Activated B cell treated with CpG ODN at 0.5 μM for 24 hours (primary cell): ENCODE measurements at regions of chr10 and their contacts with region 1.

Region 1: GRCh38 chr10:3757638-3758490 is 27.1 kb downstream of the KLF6 start:
- DNase-seq: no peak
- ATAC-seq: peak; percentile 60
- H3K4me3 Mint-ChIP-seq: peak overlapping the region; percentile 78
- H3K27ac Mint-ChIP-seq: peak overlapping the region; percentile 99
- H3K4me1 Mint-ChIP-seq: peaks cover 76% of the 10 kb centered on the region
- H3K27me3 Mint-ChIP-seq: no peaks in the 10 kb centered on the region
- CTCF ChIP-seq: no peak

Region 2: DNA sequence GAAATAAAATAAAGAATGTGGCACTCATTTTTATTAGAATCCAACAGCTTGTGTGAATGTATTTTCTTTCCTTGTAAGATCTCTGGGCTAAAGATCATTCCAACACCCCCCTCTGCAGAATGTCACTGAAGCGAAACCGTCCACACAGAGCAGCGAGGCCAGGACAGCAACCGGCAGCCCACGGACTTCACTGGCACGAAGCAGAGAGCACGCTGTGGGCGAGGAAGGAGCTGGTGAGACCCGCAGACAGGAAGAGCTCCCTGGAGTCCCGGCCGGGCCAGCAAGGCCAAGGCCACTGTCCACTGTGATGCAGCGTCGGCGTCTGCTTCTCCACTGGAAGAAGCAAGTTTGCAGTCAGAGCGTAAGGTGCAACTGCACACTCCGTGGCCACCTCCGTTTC is 172.5 kb before region 1 on chr10:
- CTCF ChIA-PET with region 1: no interaction called
- POLR2A ChIA-PET with region 1: no interaction called
- intact Hi-C with region 1: no loop called
- DNase-seq: no peak
- ATAC-seq: no peak
- H3K4me3 Mint-ChIP-seq: no peak overlapping the region
- H3K27ac Mint-ChIP-seq: no peak overlapping the region
- H3K4me1 Mint-ChIP-seq: no peaks in the 10 kb centered on the region
- H3K27me3 Mint-ChIP-seq: no peaks in the 10 kb centered on the region
- CTCF ChIP-seq: no peak

Region 3: DNA sequence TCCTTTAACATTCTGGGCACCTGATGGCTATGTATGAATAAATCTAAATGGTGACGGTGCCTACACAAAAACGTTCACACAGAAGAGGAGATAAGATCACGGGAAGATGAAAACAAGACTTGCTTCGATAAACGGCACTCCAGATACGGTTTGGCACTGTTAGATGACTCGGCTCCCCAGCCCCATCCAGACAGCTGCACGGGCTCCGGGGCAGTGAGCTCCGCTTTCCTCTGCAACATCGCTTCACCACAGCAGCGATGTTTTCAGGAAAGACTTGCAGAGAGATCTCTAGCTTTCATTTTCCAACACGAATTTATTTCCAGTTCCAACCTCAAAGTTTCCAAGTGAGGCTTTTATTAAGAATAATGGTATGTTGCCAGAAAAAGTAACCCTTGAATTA is 105.0 kb before region 1 on chr10:
- CTCF ChIA-PET with region 1: no interaction called
- POLR2A ChIA-PET with region 1: no interaction called
- intact Hi-C with region 1: loop called (anchors 10 kb)
- DNase-seq: no peak
- ATAC-seq: no peak
- H3K4me3 Mint-ChIP-seq: peak overlapping the region; percentile 21
- H3K27ac Mint-ChIP-seq: no peak overlapping the region
- H3K4me1 Mint-ChIP-seq: peaks cover 18% of the 10 kb centered on the region
- H3K27me3 Mint-ChIP-seq: no peaks in the 10 kb centered on the region
- CTCF ChIP-seq: no peak

Region 4: DNA sequence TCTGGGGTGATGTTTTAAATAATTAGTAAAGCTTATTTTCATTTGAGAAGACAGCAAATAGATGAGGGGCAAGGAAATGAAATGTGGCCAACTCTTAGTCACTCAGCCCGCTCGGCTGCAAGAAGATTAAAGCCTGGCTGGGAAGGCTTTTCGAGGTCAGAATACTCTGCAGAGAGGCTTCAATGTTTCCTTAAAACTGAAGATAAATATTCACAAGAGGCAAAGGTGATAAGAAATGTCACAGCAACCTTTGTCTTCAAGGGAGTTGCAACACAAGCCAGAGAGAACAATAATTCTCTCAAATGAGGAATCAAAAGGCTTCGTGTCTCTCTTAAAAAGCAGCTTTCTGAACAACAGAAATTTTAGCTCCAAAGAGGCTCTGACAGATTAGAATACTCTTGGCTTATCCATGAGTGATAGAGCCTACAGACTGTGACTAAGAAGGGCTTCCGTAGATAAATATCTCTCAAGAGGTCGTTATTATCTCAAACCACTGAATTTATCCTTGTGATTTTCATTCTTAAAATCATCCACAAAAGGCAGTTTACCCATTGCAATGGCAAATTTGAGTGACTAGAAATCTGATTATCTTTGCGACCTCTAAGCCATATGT is 65.4 kb before region 1 on chr10:
- CTCF ChIA-PET with region 1: no interaction called
- POLR2A ChIA-PET with region 1: no interaction called
- intact Hi-C with region 1: no loop called
- DNase-seq: no peak
- ATAC-seq: no peak
- H3K4me3 Mint-ChIP-seq: no peak overlapping the region
- H3K27ac Mint-ChIP-seq: no peak overlapping the region
- H3K4me1 Mint-ChIP-seq: no peaks in the 10 kb centered on the region
- H3K27me3 Mint-ChIP-seq: no peaks in the 10 kb centered on the region
- CTCF ChIP-seq: no peak

Region 5: DNA sequence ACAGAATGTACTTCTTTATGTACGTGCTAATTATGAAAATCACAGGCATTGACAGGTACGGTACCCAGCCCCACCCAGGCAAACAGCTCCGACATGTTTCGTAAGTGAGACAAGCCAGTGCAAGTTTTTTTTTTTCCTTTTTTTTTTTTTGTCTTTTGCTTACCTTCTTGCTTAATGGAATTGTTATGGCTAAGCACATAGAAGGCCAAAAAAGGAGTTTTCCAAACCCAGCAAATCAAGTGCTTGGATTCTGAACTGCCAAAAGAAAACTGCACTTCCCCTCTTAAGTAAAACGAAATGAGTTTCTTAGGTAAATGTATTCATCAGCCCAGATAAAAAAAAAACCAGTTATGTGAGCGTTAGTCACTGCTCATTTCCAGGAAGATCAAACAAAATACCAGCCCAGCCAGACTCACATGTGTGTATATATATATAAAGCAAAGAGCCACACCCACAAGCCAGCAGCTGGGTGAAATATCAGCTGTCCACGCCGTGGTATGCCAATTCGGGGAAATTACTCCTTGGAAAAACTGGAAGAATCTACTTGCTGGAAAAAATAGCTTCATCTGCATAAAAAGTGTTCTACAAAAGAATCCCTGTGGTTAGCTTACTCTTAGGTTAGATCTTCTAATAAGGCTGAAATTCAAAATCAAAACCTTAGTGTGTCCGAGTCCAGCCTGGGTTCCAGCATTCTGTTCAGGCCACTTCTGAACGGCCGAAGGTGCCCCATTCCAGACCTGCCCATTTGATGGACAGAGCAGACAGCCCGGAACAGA is 19.1 kb after region 1 on chr10:
- CTCF ChIA-PET with region 1: interaction called, 8 read pairs
- POLR2A ChIA-PET with region 1: interaction called, 191 read pairs
- intact Hi-C with region 1: loop called (anchors 1 kb)
- DNase-seq: no peak
- ATAC-seq: peak; percentile 26
- H3K4me3 Mint-ChIP-seq: peak overlapping the region; percentile 15
- H3K27ac Mint-ChIP-seq: peak overlapping the region; percentile 67
- H3K4me1 Mint-ChIP-seq: peaks cover 62% of the 10 kb centered on the region
- H3K27me3 Mint-ChIP-seq: no peaks in the 10 kb centered on the region
- CTCF ChIP-seq: no peak

Region 6: GRCh38 chr10:3852147-3852904 is 94.5 kb after region 1 on chr10:
- CTCF ChIA-PET with region 1: no interaction called
- POLR2A ChIA-PET with region 1: interaction called, 11 read pairs
- intact Hi-C with region 1: loop called (anchors 1 kb)
- DNase-seq: no peak
- ATAC-seq: peak; percentile 80
- H3K4me3 Mint-ChIP-seq: peak overlapping the region; percentile 56
- H3K27ac Mint-ChIP-seq: peak overlapping the region; percentile 88
- H3K4me1 Mint-ChIP-seq: peaks cover 36% of the 10 kb centered on the region
- H3K27me3 Mint-ChIP-seq: no peaks in the 10 kb centered on the region
- CTCF ChIP-seq: no peak

Region 7: GRCh38 chr10:4333459-4333894 is 575.6 kb after region 1 on chr10:
- CTCF ChIA-PET with region 1: no interaction called
- POLR2A ChIA-PET with region 1: no interaction called
- intact Hi-C with region 1: loop called (anchors 2 kb)
- DNase-seq: no peak
- ATAC-seq: peak; percentile 28
- H3K4me3 Mint-ChIP-seq: no peak overlapping the region
- H3K27ac Mint-ChIP-seq: no peak overlapping the region
- H3K4me1 Mint-ChIP-seq: no peaks in the 10 kb centered on the region
- H3K27me3 Mint-ChIP-seq: no peaks in the 10 kb centered on the region
- CTCF ChIP-seq: no peak

Region 8: DNA sequence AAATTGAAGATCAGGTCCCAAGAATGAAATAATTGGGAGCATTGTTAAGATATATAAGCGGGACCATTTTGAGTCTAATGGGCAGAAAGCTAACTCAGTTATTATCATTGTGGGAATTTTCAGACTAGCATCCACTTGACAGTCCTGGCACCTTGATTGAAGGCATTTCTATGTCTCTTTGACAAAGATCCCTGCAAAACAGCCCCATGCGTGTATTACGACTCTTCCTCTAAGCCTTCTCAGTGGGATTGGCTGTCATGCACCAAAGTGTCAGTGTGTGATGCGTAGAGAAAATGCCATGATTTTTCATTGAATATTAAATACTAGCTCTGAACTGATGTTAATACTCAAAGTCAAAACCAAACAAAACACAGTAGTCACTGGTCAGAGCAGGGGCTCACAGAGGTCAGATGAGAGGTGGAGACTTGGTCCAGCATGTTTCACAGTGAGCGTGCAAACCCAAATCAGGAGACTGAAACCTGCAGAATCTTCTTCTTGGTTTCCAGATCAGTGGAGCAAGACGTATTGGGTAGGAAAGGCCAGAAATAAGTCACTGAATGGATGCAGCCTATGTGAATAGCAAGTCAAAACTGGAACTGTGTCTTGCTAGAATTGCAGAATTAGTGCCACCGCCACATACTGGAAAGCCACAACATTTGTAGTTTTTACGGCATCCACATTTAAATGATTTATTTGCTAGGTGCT is 764.6 kb after region 1 on chr10:
- CTCF ChIA-PET with region 1: no interaction called
- POLR2A ChIA-PET with region 1: no interaction called
- intact Hi-C with region 1: no loop called
- DNase-seq: no peak
- ATAC-seq: no peak
- H3K4me3 Mint-ChIP-seq: no peak overlapping the region
- H3K27ac Mint-ChIP-seq: no peak overlapping the region
- H3K4me1 Mint-ChIP-seq: no peaks in the 10 kb centered on the region
- H3K27me3 Mint-ChIP-seq: peaks cover 12% of the 10 kb centered on the region
- CTCF ChIP-seq: no peak